Heart left ventricle (tissue), 16 donors: ENCODE measurements at regions of chr19 and their contacts with region 1.

Region 1: GRCh38 chr19:42244347-42245220 is 2.2 kb upstream of the GSK3A start:
- DNase-seq: peak; percentile 92 to 95 (median 95)
- ATAC-seq: peak; percentile 28 to 53 (median 46)
- H3K4me3 ChIP-seq: peak overlapping the region; percentile 49 to 94 (median 84)
- H3K27ac ChIP-seq: peak overlapping the region; percentile 65 to 99 (median 92)
- H3K4me1 ChIP-seq: peaks cover 15 to 82% (median 61%) of the 10 kb centered on the region in 12 donors
- H3K27me3 ChIP-seq: no peaks in the 10 kb centered on the region
- CTCF ChIP-seq: peak; percentile 48 to 88 (median 62)
- POLR2A ChIP-seq: peak; percentile 17 to 43

Region 2: DNA sequence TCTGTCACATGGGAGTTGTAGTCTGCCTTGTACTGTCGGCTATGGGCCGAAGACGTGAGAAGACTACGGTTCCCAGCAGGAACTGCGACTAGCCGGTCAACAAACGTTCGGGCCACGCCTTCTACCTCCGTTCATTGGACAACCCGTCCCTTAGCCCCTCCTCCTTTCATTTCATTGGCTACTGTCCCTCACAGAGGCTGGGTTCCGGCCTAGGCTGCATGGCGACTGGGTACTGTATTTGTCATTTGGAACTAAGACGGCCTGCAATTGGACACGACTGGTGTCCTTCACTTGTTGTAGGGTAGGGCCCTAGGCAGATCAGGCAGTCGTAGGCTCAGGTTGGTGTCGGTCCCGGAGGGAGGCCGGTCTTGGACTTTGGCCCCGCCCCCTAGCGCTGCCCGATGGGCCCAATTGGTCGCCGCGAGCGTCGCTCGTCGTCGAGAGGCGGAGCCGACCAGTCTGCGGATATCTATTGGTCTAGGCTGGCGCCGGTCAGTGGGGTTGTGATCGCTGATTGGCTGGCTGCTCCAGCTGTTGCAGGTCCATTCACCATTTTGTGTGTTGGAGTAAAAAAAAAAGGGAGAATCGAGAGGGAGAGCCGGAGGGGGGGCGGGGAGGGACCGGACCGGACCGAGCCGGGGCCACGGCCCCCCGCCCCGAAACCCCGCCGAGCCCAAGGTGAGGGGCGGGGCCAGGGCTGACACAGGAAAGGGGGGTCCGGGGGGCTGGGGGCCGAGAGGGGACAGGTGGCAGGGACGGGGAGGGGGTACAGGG is 24.3 kb after region 1 on chr19 and contains the start of gene CIC:
- intact Hi-C with region 1: loop called in 1 of 10 experiments (anchors 1 kb)
- DNase-seq: peak; percentile 100
- ATAC-seq: peak; percentile 88 to 94 (median 90)
- H3K4me3 ChIP-seq: peak within 1 kb of the TSS; percentile 40 to 81 (median 69)
- H3K27ac ChIP-seq: peak within 1 kb of the TSS; percentile 93 to 100 (median 97)
- H3K4me1 ChIP-seq: peaks cover 8 to 37% (median 29%) of the 10 kb centered on the region in 12 donors
- H3K27me3 ChIP-seq: no peaks in the 10 kb centered on the region
- CTCF ChIP-seq: no peak
- POLR2A ChIP-seq: no peak
- total RNA-seq, gene CIC: 25.5 to 54.8 (median 35.8) TPM

Region 3: GRCh38 chr19:42290523-42291438 is 46.2 kb after region 1 on chr19:
- intact Hi-C with region 1: loop called in 3 of 10 experiments (anchors 5 kb)
- DNase-seq: peak in 1 of 5 donors; percentile 44
- ATAC-seq: no peak
- H3K4me3 ChIP-seq: no peak overlapping the region
- H3K27ac ChIP-seq: no peak overlapping the region
- H3K4me1 ChIP-seq: peaks cover 4 to 14% (median 12%) of the 10 kb centered on the region in 12 donors
- H3K27me3 ChIP-seq: no peaks in the 10 kb centered on the region
- CTCF ChIP-seq: peak in 11 of 12 donors; percentile 20 to 50 (median 35)
- POLR2A ChIP-seq: no peak

Region 4: GRCh38 chr19:42325273-42325895 is 80.8 kb after region 1 on chr19 and contains the start of gene MEGF8:
- intact Hi-C with region 1: loop called in 2 of 10 experiments (anchors 1 kb)
- DNase-seq: peak; percentile 97 to 99 (median 98)
- ATAC-seq: peak; percentile 97 to 99 (median 98)
- H3K4me3 ChIP-seq: peak within 1 kb of the TSS; percentile 68 to 98 (median 88)
- H3K27ac ChIP-seq: peak within 1 kb of the TSS; percentile 29 to 88 (median 81)
- H3K4me1 ChIP-seq: peaks cover 2 to 53% (median 25%) of the 10 kb centered on the region in 12 donors
- H3K27me3 ChIP-seq: peaks cover 10 to 25% (median 21%) of the 10 kb centered on the region in 9 donors
- CTCF ChIP-seq: peak; percentile 76 to 97 (median 84)
- POLR2A ChIP-seq: peak; percentile 4 to 85
- total RNA-seq, gene MEGF8: 26.5 to 50.4 (median 36.6) TPM